ENCODE measurements at regions of chr16 and their contacts with region 1.

Region 1: DNA sequence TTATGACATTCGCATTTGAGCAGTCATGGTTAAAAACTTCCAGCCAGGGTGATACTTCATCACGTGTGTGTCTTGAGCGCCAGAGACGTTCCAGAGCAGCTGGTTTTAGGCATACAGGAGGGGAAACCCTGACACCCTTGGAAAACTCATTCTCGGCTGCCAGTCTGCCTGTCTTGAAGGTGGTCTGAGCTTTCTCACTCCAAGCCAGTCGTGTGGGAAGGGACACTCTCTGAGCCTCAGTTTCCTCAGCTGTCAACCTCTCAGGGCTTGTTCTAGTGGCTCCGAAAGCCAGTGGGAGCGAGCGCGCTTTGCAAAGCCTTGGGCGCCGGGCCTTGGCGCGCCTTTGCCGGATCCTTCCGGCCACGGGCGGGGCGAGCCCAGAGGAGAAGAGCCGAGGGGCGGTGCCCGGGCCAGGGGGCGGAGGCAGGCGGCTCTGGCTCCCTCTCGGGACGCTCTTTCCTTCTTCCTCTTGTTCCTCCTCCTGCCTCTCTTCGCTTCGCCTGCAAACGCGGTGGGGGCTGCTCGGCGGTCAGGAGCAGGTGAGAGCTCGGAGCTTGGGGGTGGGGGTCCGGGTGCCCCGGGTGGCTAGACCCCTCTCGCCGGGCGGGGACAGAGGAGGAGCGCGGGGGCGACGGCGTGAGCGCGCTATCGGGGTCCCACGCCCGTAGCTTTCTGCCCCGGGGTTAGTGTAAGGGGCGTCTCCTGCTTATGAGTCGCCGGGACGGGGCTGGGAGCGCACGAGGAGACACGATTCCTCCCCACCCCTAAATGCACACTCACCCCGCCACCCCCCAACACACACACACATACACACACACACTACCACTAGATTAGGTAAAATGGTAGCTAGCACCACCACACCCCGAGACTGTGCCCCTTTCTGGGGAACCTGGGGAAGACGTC is at the start of gene LDAF1:
- DNase-seq: peak; percentile 66 to 89
- H3K4me3 ChIP-seq: peak within 1 kb of the TSS; percentile 87
- H3K27ac ChIP-seq: peak within 1 kb of the TSS; percentile 74
- H3K4me1 ChIP-seq: peaks cover 16% of the 10 kb centered on the region
- H3K27me3 ChIP-seq: no peaks in the 10 kb centered on the region
- CTCF ChIP-seq: no peak
- total RNA-seq, gene LDAF1: 47.6 and 69.9 TPM in 2 replicates

Region 2: DNA sequence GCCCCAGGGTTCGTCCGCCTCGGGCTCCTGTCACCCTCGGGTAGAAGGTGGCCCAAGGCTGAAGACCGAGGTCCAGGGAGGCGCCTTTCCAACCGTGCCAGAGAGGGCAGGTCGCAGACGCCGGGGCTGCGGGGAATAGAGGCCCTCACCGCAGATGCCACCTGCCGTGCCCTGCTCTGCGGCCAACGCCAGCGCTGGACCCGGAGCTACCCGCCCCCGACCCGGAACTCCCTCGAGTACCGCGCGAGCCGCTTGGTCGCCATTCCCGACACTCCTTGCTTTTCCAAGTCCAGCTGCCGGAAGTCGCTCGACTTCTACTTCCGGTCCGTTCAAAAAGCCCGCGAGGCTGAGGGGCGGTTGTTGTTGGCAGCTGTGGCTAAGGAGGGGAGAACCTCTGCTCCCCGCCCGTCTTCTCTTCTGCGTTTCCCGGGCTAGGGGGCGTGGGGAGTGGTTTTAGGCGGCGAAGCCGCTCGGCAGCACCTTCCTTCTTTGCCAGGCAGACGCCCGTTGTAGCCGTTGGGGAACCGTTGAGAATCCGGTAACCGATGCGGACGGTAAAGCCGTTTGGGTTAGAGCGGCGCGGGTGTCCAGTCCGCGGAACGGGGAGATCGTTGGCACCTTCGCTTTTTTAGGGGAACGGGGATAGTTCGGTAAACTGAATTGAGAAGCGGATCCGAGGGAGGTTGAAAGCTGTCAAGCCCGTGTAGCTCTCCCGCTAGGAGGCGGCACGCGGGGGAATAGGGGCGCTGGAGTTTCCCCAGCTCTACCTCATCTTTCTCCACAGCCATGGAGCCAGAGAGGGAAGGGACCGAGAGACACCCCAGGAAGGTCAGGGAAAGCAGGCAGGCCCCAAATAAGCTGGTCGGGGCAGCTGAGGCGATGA is 352.1 kb before region 1 on chr16 and contains the starts of genes ERI2 and REXO5:
- CTCF ChIA-PET with region 1: interaction called, 3 read pairs
- POLR2A ChIA-PET with region 1: no interaction called
- intact Hi-C with region 1: loop called (anchors 2 kb)
- DNase-seq: peak; percentile 89 to 96
- H3K4me3 ChIP-seq: peak within 1 kb of the TSS; percentile 77
- H3K27ac ChIP-seq: peak within 1 kb of the TSS; percentile 47
- H3K4me1 ChIP-seq: peaks cover 10% of the 10 kb centered on the region; the same call in 1 of the 2 replicates
- H3K27me3 ChIP-seq: no peaks in the 10 kb centered on the region
- CTCF ChIP-seq: peak; percentile 53
- total RNA-seq, gene ERI2: 25.6 and 29.5 TPM in 2 replicates
- total RNA-seq, gene REXO5: 9.5 and 13.2 TPM in 2 replicates

Region 3: GRCh38 chr16:20944861-20945574 is 213.4 kb before region 1 on chr16:
- CTCF ChIA-PET with region 1: no interaction called
- POLR2A ChIA-PET with region 1: no interaction called
- intact Hi-C with region 1: no loop called
- DNase-seq: no peak
- H3K4me3 ChIP-seq: no peak overlapping the region
- H3K27ac ChIP-seq: no peak overlapping the region
- H3K4me1 ChIP-seq: peaks cover 7% of the 10 kb centered on the region; the same call in 1 of the 2 replicates
- H3K27me3 ChIP-seq: no peaks in the 10 kb centered on the region
- CTCF ChIP-seq: no peak

Region 4: DNA sequence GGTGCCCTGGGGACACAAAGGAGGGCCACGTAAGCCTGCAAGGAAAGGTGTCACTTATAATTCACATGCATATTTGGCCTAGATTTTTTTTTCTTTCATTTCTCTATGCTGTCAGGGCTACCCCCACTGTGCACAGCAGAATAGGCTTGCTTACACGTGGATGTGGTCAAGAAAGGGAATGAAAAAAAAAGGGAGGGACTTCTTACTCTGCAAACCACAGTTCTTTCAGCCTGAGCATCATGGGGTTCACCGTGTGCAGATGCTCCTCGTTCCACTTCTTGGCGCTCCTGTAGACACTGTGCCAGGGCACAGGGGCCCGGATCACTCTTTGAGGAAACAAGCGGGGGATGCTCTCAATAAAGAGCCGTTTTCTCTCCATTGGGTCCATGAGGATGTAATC is 24.4 kb before region 1 on chr16:
- CTCF ChIA-PET with region 1: interaction called, 17 read pairs
- POLR2A ChIA-PET with region 1: no interaction called
- intact Hi-C with region 1: no loop called
- DNase-seq: no peak
- H3K4me3 ChIP-seq: no peak overlapping the region
- H3K27ac ChIP-seq: no peak overlapping the region
- H3K4me1 ChIP-seq: no peaks in the 10 kb centered on the region
- H3K27me3 ChIP-seq: peaks cover 28% of the 10 kb centered on the region
- CTCF ChIP-seq: no peak

Region 5: GRCh38 chr16:21203155-21203797 is 44.8 kb after region 1 on chr16:
- CTCF ChIA-PET with region 1: no interaction called
- POLR2A ChIA-PET with region 1: no interaction called
- intact Hi-C with region 1: no loop called
- DNase-seq: no peak
- H3K4me3 ChIP-seq: no peak overlapping the region
- H3K27ac ChIP-seq: no peak overlapping the region
- H3K4me1 ChIP-seq: no peaks in the 10 kb centered on the region
- H3K27me3 ChIP-seq: peaks cover 64% of the 10 kb centered on the region
- CTCF ChIP-seq: no peak

Region 6: GRCh38 chr16:21300309-21301167 is 142.1 kb after region 1 on chr16:
- CTCF ChIA-PET with region 1: interaction called, 20 read pairs
- POLR2A ChIA-PET with region 1: interaction called, 7 read pairs
- intact Hi-C with region 1: loop called (anchors 1 kb)
- DNase-seq: peak; percentile 98 to 100
- H3K4me3 ChIP-seq: peak overlapping the region; percentile 88
- H3K27ac ChIP-seq: peak overlapping the region; percentile 85
- H3K4me1 ChIP-seq: peaks cover 27% of the 10 kb centered on the region
- H3K27me3 ChIP-seq: no peaks in the 10 kb centered on the region
- CTCF ChIP-seq: peak; percentile 80

Region 7: DNA sequence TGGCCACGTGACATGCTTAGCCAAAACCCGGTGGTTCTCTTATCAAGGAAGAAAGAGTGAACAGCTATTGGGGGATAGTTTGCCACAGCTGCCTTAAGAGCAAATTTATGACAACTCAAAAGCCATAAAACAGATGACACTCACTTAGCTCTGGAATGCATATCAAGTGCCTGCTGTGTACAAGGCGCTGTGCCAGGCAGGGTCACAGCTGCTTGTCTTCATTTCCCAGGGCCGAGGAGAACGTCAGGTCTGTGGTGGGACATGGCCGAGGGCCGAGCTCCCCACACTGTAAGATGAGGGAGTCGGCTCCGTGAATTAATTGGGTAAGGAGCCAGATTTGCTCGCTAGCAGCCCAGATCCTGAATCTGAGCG is 1061.6 kb after region 1 on chr16:
- CTCF ChIA-PET with region 1: no interaction called
- POLR2A ChIA-PET with region 1: interaction called, 12 read pairs
- intact Hi-C with region 1: no loop called
- DNase-seq: no peak
- H3K4me3 ChIP-seq: no peak overlapping the region
- H3K27ac ChIP-seq: no peak overlapping the region
- H3K4me1 ChIP-seq: no peaks in the 10 kb centered on the region
- H3K27me3 ChIP-seq: no peaks in the 10 kb centered on the region
- CTCF ChIP-seq: no peak

Measured in PC-9 (cell line).